Left colon (tissue), 2 donors: ENCODE measurements at regions of chr22 and their contacts with region 1.

Region 1: DNA sequence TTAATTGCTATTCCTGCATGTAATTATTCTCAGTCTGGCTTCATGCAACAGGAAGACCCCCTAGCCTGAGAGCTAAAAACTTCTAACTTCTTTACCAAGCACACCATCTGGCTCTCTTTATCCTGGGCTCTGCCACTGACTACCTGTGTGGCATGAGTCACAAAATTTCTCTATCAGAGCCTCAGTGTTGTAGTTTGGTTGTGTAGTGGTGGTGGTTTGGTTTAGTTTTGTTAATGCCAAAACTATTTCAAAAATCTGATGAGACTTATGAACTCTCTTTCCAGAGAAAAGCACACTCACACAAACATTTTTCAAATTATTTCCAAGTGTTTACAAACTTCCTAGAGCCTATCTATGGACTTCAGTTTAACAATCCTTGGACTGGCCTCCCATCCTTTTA is 7.5 kb upstream of the IL17RA start:
- DNase-seq: no peak
- ATAC-seq: no peak

Region 2: DNA sequence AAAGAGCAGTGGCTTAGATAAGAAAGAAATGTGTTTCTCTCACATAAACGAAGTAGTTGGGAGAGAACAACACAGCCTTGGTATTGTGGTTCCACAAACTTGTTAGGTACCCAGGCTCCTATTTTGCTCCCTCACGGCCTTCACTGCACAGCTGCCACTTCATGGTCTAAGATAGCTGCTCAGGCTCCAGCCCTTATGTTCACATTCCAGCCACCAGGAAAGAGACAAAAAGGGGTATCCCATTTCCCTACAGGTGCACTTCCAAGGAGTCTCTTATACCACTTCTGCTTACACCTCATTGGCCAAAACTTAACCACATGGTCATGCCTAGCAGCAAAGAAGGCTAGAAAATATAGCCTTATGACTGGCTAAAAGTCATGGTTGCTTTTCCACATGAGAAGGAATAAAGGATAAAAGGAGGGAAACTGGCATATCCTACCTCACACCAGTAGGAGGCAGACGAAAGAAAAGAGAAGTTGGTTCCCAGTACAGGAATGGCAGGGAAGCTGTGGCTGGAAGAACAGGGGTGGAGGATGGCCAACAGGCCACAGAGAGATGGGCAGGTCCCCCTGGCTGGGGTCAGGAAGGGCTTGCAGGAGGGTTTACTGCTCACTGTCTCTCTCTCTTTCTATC is 87.3 kb after region 1 on chr22:
- intact Hi-C with region 1: loop called in 1 of 2 experiments (anchors 10 kb)
- DNase-seq: no peak
- ATAC-seq: no peak

Region 3: DNA sequence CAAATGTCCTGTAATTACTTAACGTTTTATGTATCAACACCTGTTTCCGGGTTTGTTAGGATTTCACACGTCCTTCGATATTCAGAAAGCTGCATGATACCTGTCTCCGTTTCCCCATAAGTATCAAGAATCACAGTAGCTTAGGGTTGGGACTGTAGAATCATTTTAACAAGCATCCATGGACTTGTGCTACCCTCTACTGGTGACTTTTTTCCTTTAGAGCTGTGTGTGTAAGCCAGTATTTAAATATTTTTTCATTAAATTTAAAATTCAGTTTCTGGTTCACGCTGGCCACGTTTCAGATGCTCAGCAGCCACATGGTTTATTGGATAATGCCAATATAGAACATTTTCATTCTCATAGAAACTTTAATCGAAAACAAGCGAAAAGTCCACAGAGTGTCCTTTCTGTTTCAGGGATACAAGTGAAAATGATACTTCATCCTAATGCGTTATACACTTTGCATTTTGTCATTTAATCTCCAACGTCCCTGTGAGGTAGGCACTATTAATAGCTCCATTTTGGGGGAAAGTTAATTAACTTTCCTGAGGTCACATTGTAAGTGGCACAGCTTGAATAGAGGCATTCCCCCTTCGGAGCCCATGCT is 424.5 kb after region 1 on chr22:
- intact Hi-C with region 1: loop called in 1 of 2 experiments (anchors 5 kb)
- DNase-seq: peak in 1 of 2 donors; percentile 6
- ATAC-seq: peak; percentile 94